Caco-2 (cell line): ENCODE measurements at regions of chr14 and their contacts with region 1.

Region 1: GRCh38 chr14:68843471-68844209 is 50.8 kb upstream of the ZFP36L1 start:
- DNase-seq: peak; percentile 66 to 76
- H3K4me3 ChIP-seq: no peak overlapping the region
- H3K4me3 Mint-ChIP-seq: peak overlapping the region; percentile 62
- H3K27ac Mint-ChIP-seq: no peak overlapping the region
- H3K4me1 ChIP-seq: no peaks in the 10 kb centered on the region
- H3K4me1 Mint-ChIP-seq: peaks cover 15% of the 10 kb centered on the region
- H3K27me3 ChIP-seq: no peaks in the 10 kb centered on the region
- H3K27me3 Mint-ChIP-seq: no peaks in the 10 kb centered on the region
- CTCF ChIP-seq: peak; percentile 88 to 93

Region 2: GRCh38 chr14:67934008-67934481 is 909.6 kb before region 1 on chr14:
- CTCF ChIA-PET with region 1: no interaction called
- POLR2A ChIA-PET with region 1: no interaction called
- intact Hi-C with region 1: loop called (anchors 5 kb)
- DNase-seq: peak in 1 of 2 experiments; percentile 64
- H3K4me3 ChIP-seq: no peak overlapping the region
- H3K4me3 Mint-ChIP-seq: no peak overlapping the region
- H3K27ac Mint-ChIP-seq: peak overlapping the region; percentile 9
- H3K4me1 ChIP-seq: peaks cover 7% of the 10 kb centered on the region; the same call in 1 of the 2 replicates
- H3K4me1 Mint-ChIP-seq: peaks cover 7% of the 10 kb centered on the region
- H3K27me3 ChIP-seq: no peaks in the 10 kb centered on the region
- H3K27me3 Mint-ChIP-seq: no peaks in the 10 kb centered on the region
- CTCF ChIP-seq: peak; percentile 65 to 72

Region 3: GRCh38 chr14:68824517-68825347 is 18.9 kb before region 1 on chr14:
- CTCF ChIA-PET with region 1: interaction called, 11 read pairs
- POLR2A ChIA-PET with region 1: no interaction called
- intact Hi-C with region 1: loop called (anchors 1 kb)
- DNase-seq: peak; percentile 78 to 84
- H3K4me3 ChIP-seq: no peak overlapping the region
- H3K4me3 Mint-ChIP-seq: no peak overlapping the region
- H3K27ac Mint-ChIP-seq: no peak overlapping the region
- H3K4me1 ChIP-seq: peaks cover 10% of the 10 kb centered on the region
- H3K4me1 Mint-ChIP-seq: no peaks in the 10 kb centered on the region
- H3K27me3 ChIP-seq: no peaks in the 10 kb centered on the region
- H3K27me3 Mint-ChIP-seq: no peaks in the 10 kb centered on the region
- CTCF ChIP-seq: peak; percentile 83 to 87